Gastrocnemius medialis (tissue), 4 donors: ENCODE measurements at regions of chr2 and their contacts with region 1.

Region 1: DNA sequence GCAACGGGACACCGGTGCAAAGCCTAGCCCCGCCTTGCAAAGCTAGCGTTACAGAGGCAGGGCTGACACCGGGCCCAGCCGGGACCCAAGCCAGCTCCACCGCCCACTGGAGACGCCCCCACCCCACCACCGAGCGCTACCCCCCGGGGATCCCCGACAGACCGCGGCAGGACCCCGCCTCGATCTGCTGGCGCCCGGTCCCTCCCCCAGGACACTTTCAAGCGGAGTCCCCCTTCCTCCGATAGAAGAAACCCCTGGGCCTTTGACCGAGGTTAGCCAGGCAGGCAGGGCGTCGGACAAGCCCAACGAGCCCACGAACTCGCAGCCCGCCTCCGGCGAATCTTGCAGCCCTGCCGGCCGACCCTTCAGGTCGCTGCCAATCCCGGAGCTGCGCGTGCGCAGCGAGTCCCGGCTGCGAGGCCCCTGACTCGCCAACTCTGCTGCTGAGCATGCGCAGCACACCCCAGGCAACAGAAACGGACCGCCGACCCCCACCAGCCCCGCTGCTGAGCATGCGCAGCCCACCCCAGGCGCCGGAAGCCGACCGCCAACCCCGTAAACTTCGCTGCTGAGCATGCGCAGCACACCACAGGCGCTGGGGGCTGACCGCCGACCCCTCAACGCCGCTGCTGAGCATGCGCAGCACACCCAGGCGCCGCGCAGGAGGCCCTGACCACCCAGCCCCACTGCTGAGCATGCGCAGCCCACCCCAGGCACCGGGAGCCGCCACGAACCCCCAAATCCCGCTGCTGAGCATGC is 656 bp downstream of the ADI1 start:
- DNase-seq: peak; percentile 98
- ATAC-seq: peak; percentile 85 to 89
- H3K4me3 ChIP-seq: peak overlapping the region; percentile 79 to 98 (median 90)
- H3K27ac ChIP-seq: peak overlapping the region; percentile 96 to 99 (median 97)
- H3K4me1 ChIP-seq: peaks cover 26 to 30% of the 10 kb centered on the region in 2 donors
- H3K27me3 ChIP-seq: no peaks in the 10 kb centered on the region
- CTCF ChIP-seq: no peak
- POLR2A ChIP-seq: peak; percentile 81 to 83

Region 2: GRCh38 chr2:3379647-3380534 is 138.8 kb before region 1 on chr2 and contains the start of gene TRAPPC12:
- in situ Hi-C with region 1: no loop called
- intact Hi-C with region 1: loop called (anchors 1 kb)
- DNase-seq: peak; percentile 81 to 89
- ATAC-seq: peak; percentile 81 to 83
- H3K4me3 ChIP-seq: peak within 1 kb of the TSS; percentile 83 to 99 (median 91)
- H3K27ac ChIP-seq: peak within 1 kb of the TSS; percentile 90 to 93 (median 93)
- H3K4me1 ChIP-seq: peaks cover 29 to 36% of the 10 kb centered on the region in 2 donors
- H3K27me3 ChIP-seq: no peaks in the 10 kb centered on the region
- CTCF ChIP-seq: peak in 3 of 5 experiments; percentile 19 to 57 (median 55)
- POLR2A ChIP-seq: peak; percentile 72 to 79
- total RNA-seq, gene TRAPPC12: 36.6 to 57.4 (median 53.1) TPM

Region 3: DNA sequence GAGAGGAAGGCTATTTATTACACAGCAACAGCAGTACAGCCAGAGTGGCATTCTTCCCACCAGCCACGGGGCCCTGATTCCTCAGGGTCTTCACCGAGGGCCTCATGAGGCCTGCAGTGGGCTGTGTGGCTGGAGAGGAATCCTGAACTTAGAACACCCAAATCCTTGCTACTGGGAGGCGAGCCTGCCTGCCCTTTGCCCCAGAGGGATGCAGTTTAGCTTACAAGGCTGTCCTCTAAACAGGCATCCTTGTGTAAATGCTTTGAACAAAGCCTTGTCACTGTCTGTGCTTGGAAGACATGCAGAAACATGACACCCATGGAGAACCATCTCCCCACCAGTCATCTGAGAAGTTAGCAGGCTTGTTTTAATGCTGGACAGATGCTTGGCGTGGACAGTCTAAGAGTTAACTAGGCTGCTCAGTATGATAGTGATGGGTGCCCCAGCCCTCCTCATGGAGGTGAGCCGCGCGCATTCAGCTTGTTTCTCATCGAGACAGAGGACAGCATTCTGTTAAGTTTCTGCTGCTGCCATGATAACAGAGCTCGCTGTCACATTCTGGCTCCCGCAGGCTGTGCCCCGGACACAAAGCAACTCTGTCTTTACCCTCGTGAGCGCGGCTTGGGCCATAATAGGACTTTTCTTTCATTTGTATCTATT is 42.2 kb before region 1 on chr2:
- in situ Hi-C with region 1: no loop called
- intact Hi-C with region 1: loop called (anchors 1 kb)
- DNase-seq: peak; percentile 59 to 70
- ATAC-seq: peak; percentile 84 to 96
- H3K4me3 ChIP-seq: peak overlapping the region in 3 of 4 donors; percentile 16 to 36 (median 23)
- H3K27ac ChIP-seq: peak overlapping the region; percentile 83 to 99 (median 92)
- H3K4me1 ChIP-seq: peaks cover 30 to 49% of the 10 kb centered on the region in 2 donors
- H3K27me3 ChIP-seq: no peaks in the 10 kb centered on the region
- CTCF ChIP-seq: no peak
- POLR2A ChIP-seq: peak in 1 of 2 donors; percentile 19

Region 4: GRCh38 chr2:3575534-3576262 is 57.0 kb after region 1 on chr2:
- in situ Hi-C with region 1: loop called in 1 of 4 experiments (anchors 10 kb)
- intact Hi-C with region 1: loop called (anchors 5 kb)
- DNase-seq: no peak
- ATAC-seq: peak in 1 of 2 donors; percentile 14
- H3K4me3 ChIP-seq: peak overlapping the region; percentile 78 to 96 (median 84)
- H3K27ac ChIP-seq: peak overlapping the region; percentile 85 to 96 (median 92)
- H3K4me1 ChIP-seq: peaks cover 21 to 30% of the 10 kb centered on the region in 2 donors
- H3K27me3 ChIP-seq: no peaks in the 10 kb centered on the region
- CTCF ChIP-seq: no peak
- POLR2A ChIP-seq: no peak

Region 5: DNA sequence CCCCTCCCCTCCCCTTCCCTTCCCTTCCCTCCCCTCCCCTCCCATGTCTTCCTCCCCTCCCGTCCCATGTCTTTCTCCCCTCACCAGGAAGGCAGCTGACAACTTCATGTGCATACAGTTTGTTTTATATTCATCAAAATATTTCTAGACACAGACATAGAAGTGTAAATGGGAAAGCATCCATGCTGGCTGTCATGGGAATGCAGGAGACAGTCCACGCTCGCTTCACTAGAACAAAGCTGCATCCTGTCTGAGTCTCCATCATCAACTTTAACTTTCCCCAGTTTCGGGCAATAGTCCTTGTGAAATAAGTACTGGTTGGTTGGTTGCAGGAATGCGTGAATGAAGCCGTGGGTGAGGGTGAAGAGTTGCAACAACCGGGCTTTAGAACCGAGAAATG is 411.6 kb after region 1 on chr2:
- in situ Hi-C with region 1: no loop called
- intact Hi-C with region 1: no loop called
- DNase-seq: no peak
- ATAC-seq: no peak
- H3K4me3 ChIP-seq: no peak overlapping the region
- H3K27ac ChIP-seq: no peak overlapping the region
- H3K4me1 ChIP-seq: no peaks in the 10 kb centered on the region
- H3K27me3 ChIP-seq: no peaks in the 10 kb centered on the region
- CTCF ChIP-seq: no peak
- POLR2A ChIP-seq: no peak